Esophagus muscularis mucosa (tissue), 4 donors: ENCODE measurements at regions of chr10 and their contacts with region 1.

Region 1: GRCh38 chr10:98446661-98447221 is at the start of gene HPS1:
- DNase-seq: peak; percentile 94
- H3K4me3 ChIP-seq: peak within 1 kb of the TSS; percentile 91 to 96 (median 94)
- H3K27ac ChIP-seq: peak within 1 kb of the TSS; percentile 93 to 96 (median 94)
- H3K4me1 ChIP-seq: peaks cover 9 to 39% (median 30%) of the 10 kb centered on the region in 4 donors
- H3K27me3 ChIP-seq: no peaks in the 10 kb centered on the region
- CTCF ChIP-seq: peak in 1 of 3 experiments; percentile 31
- EP300 ChIP-seq: no peak
- POLR2A ChIP-seq: peak; percentile 81
- total RNA-seq, gene HPS1: 49.7 to 76.1 (median 63.7) TPM

Region 2: DNA sequence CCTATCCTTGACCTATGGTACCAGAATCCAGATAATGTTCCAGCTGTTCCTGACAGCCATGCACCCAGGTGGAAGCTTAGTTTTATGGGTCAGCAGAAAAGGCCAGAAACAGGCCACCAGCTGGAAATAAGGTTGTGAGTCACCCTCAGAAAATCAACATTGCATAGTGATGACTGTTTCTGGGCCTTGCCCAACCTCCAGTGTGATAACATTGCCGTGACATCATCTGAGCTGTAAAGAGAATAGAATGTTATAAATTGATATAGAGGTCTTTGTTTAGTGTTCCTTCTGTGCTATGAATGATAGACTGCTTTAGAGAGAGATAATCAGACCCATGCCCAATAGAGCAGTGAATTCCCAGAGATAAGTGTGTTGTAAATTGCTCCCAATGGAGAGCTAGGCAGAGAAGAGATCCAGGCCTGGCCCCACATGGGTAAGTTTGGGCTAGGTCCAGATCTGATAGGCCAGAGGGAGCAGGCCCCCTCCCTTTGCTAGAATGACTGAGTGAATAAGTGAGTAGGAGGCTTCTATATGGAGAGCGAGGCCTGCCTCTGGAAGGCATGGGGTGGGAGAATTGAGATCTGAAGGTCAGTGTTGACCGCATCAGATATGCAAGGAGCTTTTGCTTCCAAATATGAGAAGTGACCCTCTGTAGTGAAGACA is 14.2 kb after region 1 on chr10:
- intact Hi-C with region 1: loop called (anchors 2 kb)
- DNase-seq: peak; percentile 90
- H3K4me3 ChIP-seq: no peak overlapping the region
- H3K27ac ChIP-seq: peak overlapping the region; percentile 26 to 58 (median 46)
- H3K4me1 ChIP-seq: peaks cover 9 to 14% (median 12%) of the 10 kb centered on the region in 4 donors
- H3K27me3 ChIP-seq: no peaks in the 10 kb centered on the region
- CTCF ChIP-seq: no peak
- EP300 ChIP-seq: no peak
- POLR2A ChIP-seq: no peak